Activated B cell treated with CpG ODN at 0.5 μM for 24 hours (primary cell): ENCODE measurements at regions of chr5 and their contacts with region 1.

Region 1: DNA sequence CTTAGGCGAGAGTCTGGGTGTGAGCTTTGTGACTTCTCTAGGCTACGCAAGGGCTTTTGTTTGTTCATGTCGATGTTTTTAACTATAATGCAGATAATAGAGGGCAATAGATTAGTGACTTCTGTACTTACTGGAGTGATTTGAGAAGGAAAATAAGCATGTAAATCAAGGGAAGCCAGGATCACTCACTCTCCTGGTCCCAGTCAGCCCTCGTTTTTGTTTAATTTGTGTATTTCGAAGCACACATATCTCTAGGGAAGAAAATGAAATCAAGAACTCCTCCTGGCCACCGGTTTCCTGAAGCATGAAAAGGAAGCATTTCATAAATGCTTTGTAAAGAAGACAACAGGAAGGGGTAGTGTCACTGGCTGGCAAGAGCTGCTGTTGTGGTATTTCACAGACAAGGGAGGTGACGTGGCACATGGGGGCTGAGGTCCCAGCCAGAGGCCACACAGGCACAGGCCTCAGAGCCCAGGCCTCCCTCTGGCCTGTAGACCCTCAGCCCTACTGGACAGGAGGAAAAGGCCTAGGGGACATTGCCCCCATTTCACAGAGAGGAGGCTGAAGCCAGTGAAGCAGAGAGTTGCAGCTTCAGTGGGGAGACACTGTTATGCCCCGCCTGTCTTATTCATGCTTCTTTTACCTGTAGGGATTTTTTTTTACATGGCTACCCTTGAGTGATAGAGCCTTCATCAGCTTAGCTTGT is 34.1 kb downstream of the IRF1 start:
- DNase-seq: peak; percentile 56
- ATAC-seq: peak; percentile 78
- H3K4me3 Mint-ChIP-seq: peak overlapping the region; percentile 75
- H3K27ac Mint-ChIP-seq: peak overlapping the region; percentile 99
- H3K4me1 Mint-ChIP-seq: peaks cover 92% of the 10 kb centered on the region
- H3K27me3 Mint-ChIP-seq: no peaks in the 10 kb centered on the region
- CTCF ChIP-seq: no peak

Region 2: GRCh38 chr5:132116072-132116471 is 340.4 kb before region 1 on chr5:
- CTCF ChIA-PET with region 1: no interaction called
- POLR2A ChIA-PET with region 1: no interaction called
- intact Hi-C with region 1: no loop called
- DNase-seq: no peak
- ATAC-seq: no peak
- H3K4me3 Mint-ChIP-seq: no peak overlapping the region
- H3K27ac Mint-ChIP-seq: no peak overlapping the region
- H3K4me1 Mint-ChIP-seq: peaks cover 12% of the 10 kb centered on the region
- H3K27me3 Mint-ChIP-seq: no peaks in the 10 kb centered on the region
- CTCF ChIP-seq: no peak

Region 3: GRCh38 chr5:132437604-132438266 is 18.7 kb before region 1 on chr5:
- CTCF ChIA-PET with region 1: no interaction called
- POLR2A ChIA-PET with region 1: interaction called, 13 read pairs
- intact Hi-C with region 1: no loop called
- DNase-seq: no peak
- ATAC-seq: peak; percentile 96
- H3K4me3 Mint-ChIP-seq: peak overlapping the region; percentile 48
- H3K27ac Mint-ChIP-seq: peak overlapping the region; percentile 74
- H3K4me1 Mint-ChIP-seq: peaks cover 60% of the 10 kb centered on the region
- H3K27me3 Mint-ChIP-seq: no peaks in the 10 kb centered on the region
- CTCF ChIP-seq: no peak

Region 4: DNA sequence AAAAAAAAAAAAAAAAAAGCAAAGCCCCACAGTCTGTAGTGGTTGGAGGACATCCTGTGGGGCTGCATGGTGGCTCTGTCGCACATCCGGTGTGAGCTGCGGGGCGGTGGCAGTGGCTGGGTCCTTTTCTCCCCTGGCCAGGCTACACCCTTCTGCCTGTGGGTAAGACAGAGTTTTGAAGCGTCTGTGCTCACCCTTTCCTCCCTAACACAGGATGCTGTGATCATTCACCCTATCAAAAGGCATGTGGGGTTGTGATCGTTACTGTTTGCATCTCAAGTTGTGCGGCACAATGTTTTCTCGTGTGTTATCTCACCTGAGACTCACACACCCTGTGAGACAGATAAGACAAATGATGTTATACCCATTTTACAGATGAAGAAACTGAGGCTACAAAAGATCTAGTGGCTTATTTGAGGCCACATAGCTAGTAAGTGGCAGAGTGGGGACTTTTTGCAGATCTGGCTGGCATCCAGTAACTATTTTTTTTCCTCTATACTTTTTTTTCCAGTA is 16.6 kb after region 1 on chr5:
- CTCF ChIA-PET with region 1: interaction called, 20 read pairs
- POLR2A ChIA-PET with region 1: interaction called, 80 read pairs
- intact Hi-C with region 1: loop called (anchors 2 kb)
- DNase-seq: peak; percentile 50
- ATAC-seq: peak; percentile 87
- H3K4me3 Mint-ChIP-seq: peak overlapping the region; percentile 50
- H3K27ac Mint-ChIP-seq: peak overlapping the region; percentile 91
- H3K4me1 Mint-ChIP-seq: peaks cover 78% of the 10 kb centered on the region
- H3K27me3 Mint-ChIP-seq: no peaks in the 10 kb centered on the region
- CTCF ChIP-seq: no peak